Caco-2 (cell line): ENCODE measurements at regions of chr22 and their contacts with region 1.

Region 1: GRCh38 chr22:22770280-22770871 is 117.2 kb upstream of the IGLL5 start:
- DNase-seq: peak; percentile 66 to 81
- H3K4me3 ChIP-seq: no peak overlapping the region
- H3K4me3 Mint-ChIP-seq: no peak overlapping the region
- H3K27ac Mint-ChIP-seq: no peak overlapping the region
- H3K4me1 ChIP-seq: no peaks in the 10 kb centered on the region
- H3K4me1 Mint-ChIP-seq: no peaks in the 10 kb centered on the region
- H3K27me3 ChIP-seq: no peaks in the 10 kb centered on the region
- H3K27me3 Mint-ChIP-seq: peaks cover 3% of the 10 kb centered on the region
- CTCF ChIP-seq: peak; percentile 88 to 95

Region 2: GRCh38 chr22:22673628-22674027 is 96.7 kb before region 1 on chr22:
- CTCF ChIA-PET with region 1: no interaction called
- POLR2A ChIA-PET with region 1: no interaction called
- intact Hi-C with region 1: no loop called
- DNase-seq: no peak
- H3K4me3 ChIP-seq: no peak overlapping the region
- H3K4me3 Mint-ChIP-seq: no peak overlapping the region
- H3K27ac Mint-ChIP-seq: no peak overlapping the region
- H3K4me1 ChIP-seq: no peaks in the 10 kb centered on the region
- H3K4me1 Mint-ChIP-seq: no peaks in the 10 kb centered on the region
- H3K27me3 ChIP-seq: no peaks in the 10 kb centered on the region
- H3K27me3 Mint-ChIP-seq: peaks cover 5% of the 10 kb centered on the region
- CTCF ChIP-seq: no peak

Region 3: DNA sequence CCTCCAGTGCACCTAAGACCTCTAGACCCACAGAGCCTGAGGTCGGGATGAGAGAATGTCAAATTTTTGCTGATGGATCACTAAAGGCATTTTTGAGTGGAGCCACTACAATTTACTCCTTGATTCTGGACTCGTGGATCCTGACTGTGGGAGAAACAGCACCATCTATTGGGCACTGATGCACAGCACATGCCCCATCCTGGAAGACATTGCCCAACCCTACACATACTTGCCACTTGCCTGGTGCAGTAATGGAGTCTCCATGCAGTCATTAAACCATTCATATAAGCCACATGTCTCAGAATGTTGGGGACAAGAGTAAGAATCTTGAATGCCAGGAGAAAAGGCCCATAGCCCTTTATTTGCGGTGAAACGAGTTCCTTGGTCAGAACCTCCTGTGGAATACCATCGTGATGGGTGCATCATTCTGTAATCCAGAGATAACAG is 22.1 kb before region 1 on chr22:
- CTCF ChIA-PET with region 1: interaction called, 22 read pairs
- POLR2A ChIA-PET with region 1: no interaction called
- intact Hi-C with region 1: no loop called
- DNase-seq: peak in 1 of 2 experiments; percentile 60
- H3K4me3 ChIP-seq: no peak overlapping the region
- H3K4me3 Mint-ChIP-seq: no peak overlapping the region
- H3K27ac Mint-ChIP-seq: no peak overlapping the region
- H3K4me1 ChIP-seq: no peaks in the 10 kb centered on the region
- H3K4me1 Mint-ChIP-seq: no peaks in the 10 kb centered on the region
- H3K27me3 ChIP-seq: no peaks in the 10 kb centered on the region; the same call in none of the 2 replicates
- H3K27me3 Mint-ChIP-seq: peaks cover 4% of the 10 kb centered on the region
- CTCF ChIP-seq: peak; percentile 69 to 74

Region 4: GRCh38 chr22:22753526-22754267 is 16.7 kb before region 1 on chr22:
- CTCF ChIA-PET with region 1: interaction called, 22 read pairs
- POLR2A ChIA-PET with region 1: no interaction called
- intact Hi-C with region 1: no loop called
- DNase-seq: peak; percentile 78 to 80
- H3K4me3 ChIP-seq: no peak overlapping the region
- H3K4me3 Mint-ChIP-seq: no peak overlapping the region
- H3K27ac Mint-ChIP-seq: no peak overlapping the region
- H3K4me1 ChIP-seq: no peaks in the 10 kb centered on the region
- H3K4me1 Mint-ChIP-seq: no peaks in the 10 kb centered on the region
- H3K27me3 ChIP-seq: no peaks in the 10 kb centered on the region; the same call in 1 of the 2 replicates
- H3K27me3 Mint-ChIP-seq: no peaks in the 10 kb centered on the region
- CTCF ChIP-seq: peak; percentile 59 to 91

Region 5: DNA sequence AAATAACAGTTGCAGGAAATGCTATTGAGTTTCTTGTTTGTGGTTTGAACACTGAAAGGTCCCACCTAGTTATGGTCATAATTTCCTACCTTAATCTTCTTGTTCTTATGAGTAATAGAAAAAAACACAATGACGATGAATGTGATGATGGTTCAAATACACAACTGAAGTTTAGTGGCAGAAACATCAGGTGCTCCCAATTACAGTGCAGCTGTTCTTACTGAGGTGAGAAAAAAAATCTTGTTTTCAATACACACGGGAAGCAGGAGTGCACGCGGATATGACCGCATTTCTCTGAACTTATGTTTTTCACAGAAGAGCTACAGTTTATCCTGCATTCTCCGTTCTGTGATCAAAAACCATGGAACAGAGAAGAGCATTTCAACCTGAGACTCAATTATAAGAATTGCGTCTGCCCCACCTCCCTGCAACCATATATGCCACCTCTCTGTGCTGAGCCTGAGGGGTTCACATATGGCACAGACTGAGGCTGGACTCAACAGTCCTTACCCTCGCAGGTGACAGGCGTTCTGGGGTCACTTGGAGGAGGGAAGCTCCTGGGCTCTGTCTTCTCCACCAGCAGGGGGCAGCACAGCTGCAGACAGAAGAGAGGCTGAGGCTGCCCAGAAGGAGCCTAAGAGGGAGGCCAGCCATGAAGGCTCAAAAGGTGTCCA is 17.5 kb after region 1 on chr22:
- CTCF ChIA-PET with region 1: interaction called, 40 read pairs
- POLR2A ChIA-PET with region 1: no interaction called
- intact Hi-C with region 1: loop called (anchors 1 kb)
- DNase-seq: peak in 1 of 2 experiments; percentile 64
- H3K4me3 ChIP-seq: no peak overlapping the region
- H3K4me3 Mint-ChIP-seq: no peak overlapping the region
- H3K27ac Mint-ChIP-seq: no peak overlapping the region
- H3K4me1 ChIP-seq: peaks cover 51% of the 10 kb centered on the region
- H3K4me1 Mint-ChIP-seq: peaks cover 12% of the 10 kb centered on the region
- H3K27me3 ChIP-seq: no peaks in the 10 kb centered on the region
- H3K27me3 Mint-ChIP-seq: no peaks in the 10 kb centered on the region
- CTCF ChIP-seq: peak; percentile 64 to 84

Region 6: GRCh38 chr22:22810018-22810427 is 39.6 kb after region 1 on chr22:
- CTCF ChIA-PET with region 1: interaction called, 12 read pairs
- POLR2A ChIA-PET with region 1: no interaction called
- intact Hi-C with region 1: no loop called
- DNase-seq: peak; percentile 65 to 79
- H3K4me3 ChIP-seq: no peak overlapping the region
- H3K4me3 Mint-ChIP-seq: no peak overlapping the region
- H3K27ac Mint-ChIP-seq: no peak overlapping the region
- H3K4me1 ChIP-seq: no peaks in the 10 kb centered on the region
- H3K4me1 Mint-ChIP-seq: peaks cover 6% of the 10 kb centered on the region
- H3K27me3 ChIP-seq: no peaks in the 10 kb centered on the region
- H3K27me3 Mint-ChIP-seq: peaks cover 3% of the 10 kb centered on the region
- CTCF ChIP-seq: peak; percentile 83 to 88

Region 7: GRCh38 chr22:22865311-22866072 is 95.1 kb after region 1 on chr22:
- CTCF ChIA-PET with region 1: no interaction called
- POLR2A ChIA-PET with region 1: no interaction called
- intact Hi-C with region 1: no loop called
- DNase-seq: no peak
- H3K4me3 ChIP-seq: no peak overlapping the region
- H3K4me3 Mint-ChIP-seq: no peak overlapping the region
- H3K27ac Mint-ChIP-seq: no peak overlapping the region
- H3K4me1 ChIP-seq: no peaks in the 10 kb centered on the region
- H3K4me1 Mint-ChIP-seq: peaks cover 7% of the 10 kb centered on the region
- H3K27me3 ChIP-seq: no peaks in the 10 kb centered on the region
- H3K27me3 Mint-ChIP-seq: peaks cover 8% of the 10 kb centered on the region
- CTCF ChIP-seq: no peak

Region 8: DNA sequence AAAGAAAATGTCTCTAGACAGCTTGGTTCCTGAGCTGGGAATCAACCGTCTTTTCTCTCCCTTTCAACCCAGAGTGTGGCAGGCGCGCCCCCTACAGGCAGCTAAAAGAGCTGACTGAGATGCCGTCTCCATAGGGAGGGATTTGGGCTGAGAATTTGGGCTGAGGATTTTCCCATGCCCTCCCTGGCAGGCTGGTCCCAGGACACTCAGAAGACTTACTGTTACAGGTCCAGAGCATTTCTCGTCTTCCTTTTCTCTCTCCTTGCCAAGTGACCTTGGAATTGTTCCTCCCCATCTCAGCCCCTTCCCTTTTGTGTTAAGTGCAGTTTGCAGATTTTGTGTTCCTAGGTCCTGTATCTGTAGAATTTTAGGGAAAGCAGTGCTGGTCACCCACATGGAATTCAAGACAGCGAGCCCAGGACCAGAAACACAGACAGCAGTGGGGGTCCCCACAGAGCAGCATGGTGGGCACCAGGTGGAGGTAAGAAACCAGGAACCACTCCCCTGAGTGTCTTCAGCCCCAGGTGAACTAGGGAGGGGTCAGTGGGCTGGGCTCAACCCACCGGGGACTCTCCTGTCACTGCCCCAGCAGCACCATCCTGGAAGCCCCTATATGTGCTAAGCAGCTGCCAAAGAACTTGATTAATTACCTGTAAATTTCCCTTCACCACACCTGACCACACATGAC is 107.3 kb after region 1 on chr22:
- CTCF ChIA-PET with region 1: interaction called, 20 read pairs
- POLR2A ChIA-PET with region 1: no interaction called
- intact Hi-C with region 1: loop called (anchors 1 kb)
- DNase-seq: peak; percentile 57 to 77
- H3K4me3 ChIP-seq: no peak overlapping the region
- H3K4me3 Mint-ChIP-seq: no peak overlapping the region
- H3K27ac Mint-ChIP-seq: no peak overlapping the region
- H3K4me1 ChIP-seq: no peaks in the 10 kb centered on the region
- H3K4me1 Mint-ChIP-seq: no peaks in the 10 kb centered on the region
- H3K27me3 ChIP-seq: no peaks in the 10 kb centered on the region
- H3K27me3 Mint-ChIP-seq: no peaks in the 10 kb centered on the region
- CTCF ChIP-seq: peak; percentile 81 to 90